Activated T-helper 1 cell treated with anti-CD3 and anti-CD28 coated beads, Interleukin-12 subunit alpha, Interleukin-12 subunit beta, Interleukin-2, Interleukin-4 antibody, amounts not matched to agents 30 ng/mL and 10 ng/mL and 1 ng/mL, durations not matched to agents 14 hours and 24 hours and 36 hours (primary cell): ENCODE measurements at regions of chr3 and their contacts with region 1.

Region 1: DNA sequence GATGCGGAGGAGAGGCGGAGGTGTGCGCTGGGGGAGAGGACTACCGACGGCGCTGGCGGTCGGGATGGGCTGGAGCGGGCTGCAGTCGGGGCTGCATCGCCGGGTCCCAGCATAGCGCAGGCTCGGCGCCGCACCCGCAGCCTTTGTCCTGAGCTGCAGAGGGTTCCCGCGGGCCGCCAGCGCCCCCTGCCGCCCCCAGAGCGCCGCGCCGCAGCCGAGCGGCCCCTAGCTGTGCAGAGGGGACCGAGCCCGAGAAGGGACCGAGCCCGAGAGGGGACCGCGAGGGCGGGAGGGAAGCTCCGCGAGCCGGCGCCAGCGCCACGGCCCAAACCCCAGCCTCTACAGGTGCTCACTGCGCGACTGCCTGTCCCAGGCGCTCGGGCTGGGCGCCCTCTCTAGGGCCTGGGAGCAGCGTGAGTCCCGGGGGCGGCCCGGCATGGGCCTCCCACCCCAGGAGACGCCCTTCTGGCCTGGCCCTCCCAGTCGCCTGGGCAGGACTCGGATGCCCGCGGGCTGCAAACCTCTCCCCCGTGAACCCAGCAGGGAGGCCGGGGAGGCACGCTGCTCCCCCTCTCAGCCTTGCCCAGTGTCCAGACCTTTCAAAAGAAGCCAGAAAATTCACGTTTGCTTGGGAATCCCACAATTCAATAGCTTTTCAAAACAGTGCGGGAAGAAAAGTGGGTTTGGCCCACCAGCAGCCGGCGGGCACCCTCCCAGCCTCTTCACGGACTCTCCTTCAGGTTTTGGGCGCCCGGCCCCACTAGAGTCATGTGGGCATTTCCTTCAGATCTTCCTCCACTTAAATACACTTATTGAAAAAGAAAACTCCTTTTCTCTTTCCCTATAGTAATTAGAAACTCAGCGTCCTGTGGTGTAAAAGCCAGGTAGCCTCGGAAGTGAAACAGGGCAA is 134.7 kb downstream of the TPRA1 start:
- DNase-seq: peak; percentile 31
- H3K4me3 Mint-ChIP-seq: no peak overlapping the region
- H3K27ac Mint-ChIP-seq: no peak overlapping the region
- H3K4me1 Mint-ChIP-seq: peaks cover 4% of the 10 kb centered on the region
- H3K27me3 Mint-ChIP-seq: peaks cover 48% of the 10 kb centered on the region

Region 2: GRCh38 chr3:126752303-126752842 is 703.4 kb before region 1 on chr3:
- intact Hi-C with region 1: loop called (anchors 1 kb)
- DNase-seq: peak; percentile 46
- H3K4me3 Mint-ChIP-seq: no peak overlapping the region
- H3K27ac Mint-ChIP-seq: no peak overlapping the region
- H3K4me1 Mint-ChIP-seq: peaks cover 8% of the 10 kb centered on the region
- H3K27me3 Mint-ChIP-seq: no peaks in the 10 kb centered on the region

Region 3: GRCh38 chr3:127483902-127484591 is 28.3 kb after region 1 on chr3:
- intact Hi-C with region 1: loop called (anchors 2 kb)
- DNase-seq: peak; percentile 52
- H3K4me3 Mint-ChIP-seq: no peak overlapping the region
- H3K27ac Mint-ChIP-seq: peak overlapping the region; percentile 48
- H3K4me1 Mint-ChIP-seq: peaks cover 19% of the 10 kb centered on the region
- H3K27me3 Mint-ChIP-seq: peaks cover 23% of the 10 kb centered on the region